ENCODE measurements at regions of chr3 and their contacts with region 1.

Region 1: GRCh38 chr3:197417441-197417840 is 119.0 kb upstream of the DLG1 start:
- DNase-seq: peak; percentile 65
- ATAC-seq: peak; percentile 43
- H3K4me3 ChIP-seq: no peak overlapping the region
- H3K27ac ChIP-seq: no peak overlapping the region
- H3K4me1 ChIP-seq: peaks cover 19% of the 10 kb centered on the region
- H3K27me3 ChIP-seq: no peaks in the 10 kb centered on the region
- CTCF ChIP-seq: no peak

Region 2: GRCh38 chr3:197394464-197395321 is 22.7 kb before region 1 on chr3:
- CTCF ChIA-PET with region 1: no interaction called
- POLR2A ChIA-PET with region 1: no interaction called
- intact Hi-C with region 1: loop called (anchors 2 kb)
- DNase-seq: peak; percentile 98
- ATAC-seq: peak; percentile 96
- H3K4me3 ChIP-seq: no peak overlapping the region
- H3K27ac ChIP-seq: peak overlapping the region; percentile 92
- H3K4me1 ChIP-seq: peaks cover 26% of the 10 kb centered on the region
- H3K27me3 ChIP-seq: peaks cover 12% of the 10 kb centered on the region
- CTCF ChIP-seq: no peak